K562 (cell line): ENCODE measurements at regions of chr2 and their contacts with region 1.

Region 1: GRCh38 chr2:219736209-219736608 is 108.8 kb downstream of the SLC4A3 start:
- DNase-seq: peak; percentile 15 to 43 (median 30)
- ATAC-seq: peak; percentile 81
- H3K4me3 ChIP-seq: no peak overlapping the region
- H3K27ac ChIP-seq: no peak overlapping the region
- H3K4me1 ChIP-seq: no peaks in the 10 kb centered on the region
- H3K27me3 ChIP-seq: peaks cover 0 to 4% of the 10 kb centered on the region in 2 experiments; a peak in 1 of 5 replicates
- CTCF ChIP-seq: peak; percentile 36 to 63 (median 45); a peak in 4 of 6 replicates
- EP300 ChIP-seq: no peak
- POLR2A ChIP-seq: no peak
- RAD21 ChIP-seq: peak; percentile 51 to 71

Region 2: GRCh38 chr2:219836647-219837177 is 100.5 kb after region 1 on chr2:
- CTCF ChIA-PET with region 1: interaction called, 3 read pairs
- POLR2A ChIA-PET with region 1: no interaction called
- in situ Hi-C with region 1: no loop called
- intact Hi-C with region 1: loop called (anchors 2 kb)
- DNase-seq: peak in 1 of 4 experiments; percentile 30
- ATAC-seq: 0 out of 3 replicates have a peak, but pooled peaks have one; percentile 42
- H3K4me3 ChIP-seq: no peak overlapping the region
- H3K27ac ChIP-seq: no peak overlapping the region
- H3K4me1 ChIP-seq: no peaks in the 10 kb centered on the region
- H3K27me3 ChIP-seq: 0 out of 5 replicates have a peak, but pooled peaks cover 0 to 5% of the 10 kb centered on the region in 2 experiments
- CTCF ChIP-seq: peak in 2 of 3 experiments; percentile 27 to 57; a peak in 3 of 6 replicates
- EP300 ChIP-seq: no peak
- POLR2A ChIP-seq: no peak
- RAD21 ChIP-seq: peak in 1 of 2 experiments; percentile 40; a peak in 2 of 4 replicates

Region 3: GRCh38 chr2:219851801-219852481 is 115.7 kb after region 1 on chr2:
- CTCF ChIA-PET with region 1: no interaction called
- POLR2A ChIA-PET with region 1: no interaction called
- in situ Hi-C with region 1: no loop called
- intact Hi-C with region 1: no loop called
- DNase-seq: no peak
- ATAC-seq: peak; percentile 50; the same call in 1 of the 3 replicates
- H3K4me3 ChIP-seq: no peak overlapping the region
- H3K27ac ChIP-seq: no peak overlapping the region
- H3K4me1 ChIP-seq: no peaks in the 10 kb centered on the region; a peak in 1 of 5 replicates
- H3K27me3 ChIP-seq: no peaks in the 10 kb centered on the region; a peak in 2 of 5 replicates
- CTCF ChIP-seq: no peak
- EP300 ChIP-seq: no peak
- POLR2A ChIP-seq: no peak
- RAD21 ChIP-seq: no peak

Region 4: GRCh38 chr2:219929835-219930234 is 193.6 kb after region 1 on chr2:
- CTCF ChIA-PET with region 1: no interaction called
- POLR2A ChIA-PET with region 1: no interaction called
- in situ Hi-C with region 1: no loop called
- intact Hi-C with region 1: no loop called
- DNase-seq: no peak
- ATAC-seq: no peak
- H3K4me3 ChIP-seq: no peak overlapping the region
- H3K27ac ChIP-seq: no peak overlapping the region
- H3K4me1 ChIP-seq: no peaks in the 10 kb centered on the region
- H3K27me3 ChIP-seq: no peaks in the 10 kb centered on the region
- CTCF ChIP-seq: no peak
- EP300 ChIP-seq: no peak
- POLR2A ChIP-seq: no peak
- RAD21 ChIP-seq: no peak

Region 5: GRCh38 chr2:219947575-219947974 is 211.4 kb after region 1 on chr2:
- CTCF ChIA-PET with region 1: no interaction called
- POLR2A ChIA-PET with region 1: no interaction called
- in situ Hi-C with region 1: no loop called
- intact Hi-C with region 1: no loop called
- DNase-seq: no peak
- ATAC-seq: no peak
- H3K4me3 ChIP-seq: no peak overlapping the region
- H3K27ac ChIP-seq: no peak overlapping the region
- H3K4me1 ChIP-seq: no peaks in the 10 kb centered on the region
- H3K27me3 ChIP-seq: no peaks in the 10 kb centered on the region
- CTCF ChIP-seq: no peak
- EP300 ChIP-seq: no peak
- POLR2A ChIP-seq: no peak
- RAD21 ChIP-seq: no peak

Region 6: GRCh38 chr2:219998107-219998506 is 261.9 kb after region 1 on chr2:
- CTCF ChIA-PET with region 1: no interaction called
- POLR2A ChIA-PET with region 1: no interaction called
- in situ Hi-C with region 1: no loop called
- intact Hi-C with region 1: loop called (anchors 2 kb)
- DNase-seq: no peak
- ATAC-seq: no peak
- H3K4me3 ChIP-seq: no peak overlapping the region
- H3K27ac ChIP-seq: no peak overlapping the region
- H3K4me1 ChIP-seq: no peaks in the 10 kb centered on the region
- H3K27me3 ChIP-seq: no peaks in the 10 kb centered on the region
- CTCF ChIP-seq: no peak
- EP300 ChIP-seq: no peak
- POLR2A ChIP-seq: no peak
- RAD21 ChIP-seq: no peak

Region 7: GRCh38 chr2:220460257-220460985 is 724.2 kb after region 1 on chr2:
- CTCF ChIA-PET with region 1: no interaction called
- POLR2A ChIA-PET with region 1: no interaction called
- in situ Hi-C with region 1: no loop called
- intact Hi-C with region 1: no loop called
- DNase-seq: no peak
- ATAC-seq: no peak
- H3K4me3 ChIP-seq: no peak overlapping the region
- H3K27ac ChIP-seq: no peak overlapping the region
- H3K4me1 ChIP-seq: no peaks in the 10 kb centered on the region
- H3K27me3 ChIP-seq: no peaks in the 10 kb centered on the region
- CTCF ChIP-seq: no peak
- EP300 ChIP-seq: no peak
- POLR2A ChIP-seq: no peak
- RAD21 ChIP-seq: no peak

Region 8: GRCh38 chr2:221573430-221574230 is 1837.4 kb after region 1 on chr2:
- CTCF ChIA-PET with region 1: interaction called, 4 read pairs
- POLR2A ChIA-PET with region 1: no interaction called
- in situ Hi-C with region 1: no loop called
- intact Hi-C with region 1: loop called (anchors 5 kb)
- DNase-seq: peak; percentile 41 to 67 (median 66)
- ATAC-seq: peak; percentile 91
- H3K4me3 ChIP-seq: no peak overlapping the region
- H3K27ac ChIP-seq: no peak overlapping the region
- H3K4me1 ChIP-seq: peaks cover 0 to 25% of the 10 kb centered on the region in 2 experiments; a peak in 1 of 5 replicates
- H3K27me3 ChIP-seq: no peaks in the 10 kb centered on the region; a peak in 1 of 5 replicates
- CTCF ChIP-seq: peak; percentile 57 to 80 (median 59)
- EP300 ChIP-seq: no peak
- POLR2A ChIP-seq: no peak
- RAD21 ChIP-seq: peak; percentile 66 to 74